ENCODE measurements at regions of chr9 and their contacts with region 1.

Region 1: GRCh38 chr9:136267261-136268111 is 21.9 kb upstream of the QSOX2 start:
- ATAC-seq: peak; percentile 51 to 96 (median 72)
- H3K4me3 ChIP-seq: peak overlapping the region; percentile 16 to 31 (median 23)
- H3K27ac ChIP-seq: peak overlapping the region in 1 of 2 donors; percentile 58
- H3K4me1 ChIP-seq: peaks cover 30% of the 10 kb centered on the region in 2 donors

Region 2: DNA sequence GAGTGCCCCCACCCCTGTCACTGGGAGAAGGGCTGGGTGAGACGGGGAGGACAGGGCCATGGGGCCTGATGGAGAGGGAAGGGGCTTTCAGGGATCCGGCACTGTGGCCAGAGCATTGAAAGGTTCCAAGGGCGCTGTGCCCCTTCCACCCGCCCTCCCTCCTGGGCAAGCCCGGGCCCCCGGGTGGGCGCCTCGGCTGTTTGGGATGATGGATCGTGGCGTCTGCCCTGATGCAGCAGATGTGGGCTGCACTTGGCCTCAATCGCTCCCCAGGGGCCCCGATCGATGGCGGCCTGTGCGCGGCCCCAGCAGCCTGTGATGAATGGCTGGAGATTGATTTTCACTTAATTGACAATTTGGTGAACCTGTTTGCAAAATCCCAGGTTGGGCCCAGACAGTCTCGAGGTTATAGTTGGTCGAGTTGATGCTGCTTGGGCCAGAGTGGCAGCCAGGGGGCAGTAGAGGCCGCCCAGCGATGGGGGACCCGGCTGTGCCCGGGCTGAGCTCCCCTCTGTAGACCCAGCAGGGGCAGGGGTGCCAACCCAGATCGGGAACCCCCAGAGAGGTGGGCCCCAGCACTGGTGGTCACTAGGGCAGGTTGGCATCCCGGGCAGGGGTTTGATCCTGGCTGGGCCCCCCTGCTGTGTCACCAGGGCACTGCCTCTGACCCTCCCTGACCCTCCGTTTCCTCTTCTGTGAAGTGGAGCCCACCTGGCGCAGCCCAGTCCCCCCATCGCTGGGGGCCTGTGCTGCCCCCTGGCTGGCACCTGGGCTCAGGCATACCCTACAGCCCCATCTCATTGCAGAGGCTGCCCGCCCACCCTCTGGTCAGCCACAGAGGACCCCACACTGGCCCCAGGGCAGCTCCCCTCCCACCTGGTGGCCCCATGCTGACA is 97.2 kb before region 1 on chr9:
- in situ Hi-C with region 1: loop called in 3 of 9 experiments (anchors 25 kb)
- ATAC-seq: peak; percentile 71 to 88 (median 76)
- H3K4me3 ChIP-seq: no peak overlapping the region
- H3K27ac ChIP-seq: no peak overlapping the region
- H3K4me1 ChIP-seq: peaks cover 30 to 34% of the 10 kb centered on the region in 2 donors